HEK293T (cell line): ENCODE measurements at regions of chr12 and their contacts with region 1.

Region 1: DNA sequence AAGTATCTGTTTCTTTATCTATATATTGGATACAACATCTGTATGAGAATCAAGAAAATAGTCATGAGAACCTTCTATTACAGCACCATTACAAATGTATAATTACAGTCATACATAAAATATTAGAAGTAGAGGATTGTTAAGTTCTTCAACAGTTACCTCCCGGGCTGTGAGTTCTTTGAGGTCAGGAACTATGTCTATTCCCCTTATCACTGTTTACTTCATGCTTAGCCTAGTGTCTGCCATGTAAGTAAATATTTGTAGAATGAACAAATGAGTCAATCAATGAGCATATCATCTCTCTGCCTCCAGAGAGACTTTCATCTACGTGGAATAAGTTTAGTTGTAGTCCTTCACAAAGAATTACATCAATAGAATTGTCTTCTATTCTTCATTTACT is 47.2 kb downstream of the PUS7L start:
- DNase-seq: no peak

Region 2: DNA sequence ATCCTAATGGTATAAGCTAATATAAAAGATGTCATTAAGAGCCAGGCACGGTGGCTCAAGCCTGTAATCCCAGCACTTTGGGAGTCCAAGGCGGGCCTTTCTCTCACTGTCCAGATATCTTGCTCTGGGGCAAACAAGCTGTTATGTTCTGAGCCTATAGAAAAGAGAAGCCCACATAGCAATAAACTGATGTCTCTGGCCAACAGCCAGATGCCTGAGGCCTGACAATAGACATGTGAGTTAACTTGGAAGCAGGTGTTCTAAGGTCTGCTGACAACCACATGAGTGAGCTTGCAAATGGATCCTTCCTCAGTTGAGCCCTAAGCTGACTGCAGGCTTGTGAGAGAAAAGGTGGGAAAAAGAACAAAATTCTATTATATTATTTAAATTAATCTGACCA is 1498.3 kb before region 1 on chr12:
- CTCF ChIA-PET with region 1: interaction called, 11 read pairs
- POLR2A ChIA-PET with region 1: no interaction called
- DNase-seq: peak; percentile 16

Region 3: DNA sequence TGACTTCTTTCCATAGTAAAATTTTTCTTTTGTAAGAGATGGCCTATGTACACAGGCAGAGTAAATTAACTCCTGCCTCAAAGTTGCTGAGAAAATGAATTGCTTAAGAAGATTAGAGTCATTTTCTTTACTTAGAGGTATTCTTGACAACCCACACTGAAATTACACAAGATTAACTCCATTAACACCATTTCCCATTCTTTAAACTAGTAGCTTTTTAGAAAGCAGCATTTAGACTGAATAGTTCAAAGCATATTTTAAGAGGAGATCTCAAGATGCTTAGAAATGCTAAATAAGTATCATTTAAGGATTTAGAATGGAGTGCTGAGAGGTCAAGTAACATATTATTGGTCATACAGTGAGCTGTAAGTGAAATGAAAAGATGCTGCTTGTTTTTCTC is 11.8 kb after region 1 on chr12:
- CTCF ChIA-PET with region 1: no interaction called
- POLR2A ChIA-PET with region 1: no interaction called
- DNase-seq: no peak

Region 4: DNA sequence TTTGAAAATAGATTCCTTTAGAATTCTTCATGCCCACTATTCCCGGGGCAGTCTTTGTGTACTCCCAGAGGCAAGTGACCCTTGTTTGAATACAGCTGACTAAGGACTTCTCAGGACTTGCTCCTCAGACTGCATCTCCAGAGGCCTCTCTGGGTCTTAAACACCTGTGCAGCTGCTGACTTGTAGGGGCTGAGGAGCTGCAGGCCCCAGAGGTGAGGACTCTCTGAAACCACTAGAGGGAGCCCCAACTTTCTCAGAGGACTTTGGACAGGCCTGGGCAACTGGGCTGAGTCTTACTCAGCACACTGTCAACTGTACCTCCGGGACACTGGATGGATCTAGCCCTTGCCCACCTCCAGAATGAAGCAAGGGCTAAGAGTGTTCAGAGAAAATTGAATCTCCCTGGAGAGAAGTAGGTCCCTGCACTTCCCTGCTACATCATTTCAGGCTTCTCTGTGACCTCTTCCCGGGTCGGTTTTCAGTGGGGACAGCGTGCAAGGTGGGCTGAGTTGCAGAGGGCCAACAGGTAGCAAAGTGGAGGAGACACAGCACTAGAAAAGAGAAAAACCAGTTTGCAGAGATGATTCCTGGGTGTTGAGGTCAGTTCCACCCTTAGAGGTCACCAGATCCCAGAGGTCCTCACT is 289.1 kb after region 1 on chr12:
- CTCF ChIA-PET with region 1: no interaction called
- POLR2A ChIA-PET with region 1: no interaction called
- DNase-seq: peak; percentile 70